Activated naive CD4-positive, alpha-beta T cell treated with anti-CD3 and anti-CD28 coated beads for 36 hours (primary cell): ENCODE measurements at regions of chr7 and their contacts with region 1.

Region 1: GRCh38 chr7:143214789-143215679 is 6.8 kb upstream of the TAS2R40 start:
- DNase-seq: peak; percentile 73
- H3K4me3 Mint-ChIP-seq: no peak overlapping the region
- H3K27ac Mint-ChIP-seq: no peak overlapping the region
- H3K4me1 Mint-ChIP-seq: no peaks in the 10 kb centered on the region
- H3K27me3 Mint-ChIP-seq: no peaks in the 10 kb centered on the region

Region 2: GRCh38 chr7:141975806-141976523 is 1239.1 kb before region 1 on chr7:
- CTCF ChIA-PET with region 1: no interaction called
- intact Hi-C with region 1: loop called (anchors 10 kb)
- DNase-seq: peak; percentile 88
- H3K4me3 Mint-ChIP-seq: peak overlapping the region; percentile 76
- H3K27ac Mint-ChIP-seq: peak overlapping the region; percentile 28
- H3K4me1 Mint-ChIP-seq: peaks cover 18% of the 10 kb centered on the region
- H3K27me3 Mint-ChIP-seq: no peaks in the 10 kb centered on the region

Region 3: DNA sequence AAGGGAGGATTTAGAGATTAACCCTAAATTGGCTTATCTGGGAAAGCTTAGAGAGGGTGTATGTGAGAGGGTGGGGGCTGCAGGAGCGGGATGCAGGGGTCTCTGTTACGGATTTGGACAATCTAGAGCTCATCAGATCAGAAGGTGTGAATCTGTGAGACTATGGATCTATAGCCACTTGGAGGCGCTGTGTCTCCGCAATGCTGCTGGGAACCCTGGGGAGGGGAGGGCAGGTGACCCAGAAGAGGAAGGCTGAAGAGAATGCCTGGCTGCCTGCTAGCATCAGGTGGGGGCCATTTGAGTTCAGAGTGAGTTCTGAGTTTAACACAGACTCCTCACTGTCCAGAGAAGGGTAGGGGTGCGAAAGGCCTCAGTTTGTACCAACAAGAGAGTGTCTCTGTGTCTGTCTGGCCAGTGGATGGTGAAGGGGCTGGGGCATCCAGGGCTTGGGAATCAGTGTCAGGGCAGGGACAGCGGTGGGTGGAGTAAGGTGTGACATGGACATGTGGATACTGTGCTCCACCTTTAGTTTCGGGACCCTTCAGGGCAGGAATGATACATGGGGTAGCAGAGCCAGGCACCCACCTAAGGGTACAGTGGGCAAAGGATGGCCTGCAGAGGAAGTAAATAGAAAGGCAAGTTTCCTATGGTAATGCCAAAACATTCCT is 769.9 kb before region 1 on chr7:
- CTCF ChIA-PET with region 1: no interaction called
- intact Hi-C with region 1: loop called (anchors 10 kb)
- DNase-seq: peak; percentile 72
- H3K4me3 Mint-ChIP-seq: no peak overlapping the region
- H3K27ac Mint-ChIP-seq: peak overlapping the region; percentile 70
- H3K4me1 Mint-ChIP-seq: peaks cover 33% of the 10 kb centered on the region
- H3K27me3 Mint-ChIP-seq: no peaks in the 10 kb centered on the region

Region 4: GRCh38 chr7:142516038-142516501 is 699.0 kb before region 1 on chr7:
- CTCF ChIA-PET with region 1: no interaction called
- intact Hi-C with region 1: loop called (anchors 5 kb)
- DNase-seq: peak; percentile 54
- H3K4me3 Mint-ChIP-seq: no peak overlapping the region
- H3K27ac Mint-ChIP-seq: peak overlapping the region; percentile 41
- H3K4me1 Mint-ChIP-seq: peaks cover 53% of the 10 kb centered on the region
- H3K27me3 Mint-ChIP-seq: no peaks in the 10 kb centered on the region

Region 5: GRCh38 chr7:142603870-142604448 is 611.1 kb before region 1 on chr7:
- CTCF ChIA-PET with region 1: interaction called, 5 read pairs
- intact Hi-C with region 1: loop called (anchors 5 kb)
- DNase-seq: peak; percentile 71
- H3K4me3 Mint-ChIP-seq: no peak overlapping the region
- H3K27ac Mint-ChIP-seq: peak overlapping the region; percentile 68
- H3K4me1 Mint-ChIP-seq: peaks cover 6% of the 10 kb centered on the region
- H3K27me3 Mint-ChIP-seq: no peaks in the 10 kb centered on the region

Region 6: DNA sequence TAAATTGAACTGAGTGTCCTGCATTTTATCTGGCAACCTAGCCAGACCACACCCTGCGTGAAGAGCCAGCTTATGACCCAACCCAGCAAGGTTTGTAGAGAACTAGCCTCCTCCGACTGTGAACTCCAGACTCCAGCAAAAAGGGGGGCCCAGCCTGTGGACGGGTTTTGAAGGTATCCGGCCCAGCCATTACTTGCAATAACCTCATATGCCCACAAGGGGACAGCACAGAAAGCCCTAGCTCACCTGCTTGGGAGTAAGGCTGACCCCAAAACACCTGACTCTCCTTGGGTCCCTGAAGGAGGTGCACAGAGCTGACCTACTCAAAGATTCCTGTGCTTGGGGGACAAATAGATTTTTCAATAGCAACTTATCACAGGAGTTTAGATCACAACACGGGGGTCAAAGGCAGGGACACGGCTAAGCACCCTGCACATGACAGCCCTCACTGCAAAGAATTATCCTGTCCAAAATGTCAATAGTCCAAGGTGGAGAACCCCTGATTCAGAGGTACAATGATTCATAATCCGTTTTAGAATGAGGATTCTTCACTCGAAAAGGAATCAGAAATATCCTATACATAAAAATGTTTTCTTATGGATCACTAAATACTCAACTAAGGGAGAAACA is 334.0 kb before region 1 on chr7:
- CTCF ChIA-PET with region 1: interaction called, 7 read pairs
- intact Hi-C with region 1: loop called (anchors 1 kb)
- DNase-seq: peak; percentile 69
- H3K4me3 Mint-ChIP-seq: no peak overlapping the region
- H3K27ac Mint-ChIP-seq: no peak overlapping the region
- H3K4me1 Mint-ChIP-seq: peaks cover 1% of the 10 kb centered on the region
- H3K27me3 Mint-ChIP-seq: no peaks in the 10 kb centered on the region

Region 7: GRCh38 chr7:143203386-143203785 is 11.6 kb before region 1 on chr7:
- CTCF ChIA-PET with region 1: interaction called, 14 read pairs
- intact Hi-C with region 1: no loop called
- DNase-seq: no peak
- H3K4me3 Mint-ChIP-seq: no peak overlapping the region
- H3K27ac Mint-ChIP-seq: no peak overlapping the region
- H3K4me1 Mint-ChIP-seq: peaks cover 11% of the 10 kb centered on the region
- H3K27me3 Mint-ChIP-seq: peaks cover 4% of the 10 kb centered on the region